Activated B cell treated with CpG ODN at 0.5 μM for 24 hours (primary cell): ENCODE measurements at regions of chr13 and their contacts with region 1.

Region 1: DNA sequence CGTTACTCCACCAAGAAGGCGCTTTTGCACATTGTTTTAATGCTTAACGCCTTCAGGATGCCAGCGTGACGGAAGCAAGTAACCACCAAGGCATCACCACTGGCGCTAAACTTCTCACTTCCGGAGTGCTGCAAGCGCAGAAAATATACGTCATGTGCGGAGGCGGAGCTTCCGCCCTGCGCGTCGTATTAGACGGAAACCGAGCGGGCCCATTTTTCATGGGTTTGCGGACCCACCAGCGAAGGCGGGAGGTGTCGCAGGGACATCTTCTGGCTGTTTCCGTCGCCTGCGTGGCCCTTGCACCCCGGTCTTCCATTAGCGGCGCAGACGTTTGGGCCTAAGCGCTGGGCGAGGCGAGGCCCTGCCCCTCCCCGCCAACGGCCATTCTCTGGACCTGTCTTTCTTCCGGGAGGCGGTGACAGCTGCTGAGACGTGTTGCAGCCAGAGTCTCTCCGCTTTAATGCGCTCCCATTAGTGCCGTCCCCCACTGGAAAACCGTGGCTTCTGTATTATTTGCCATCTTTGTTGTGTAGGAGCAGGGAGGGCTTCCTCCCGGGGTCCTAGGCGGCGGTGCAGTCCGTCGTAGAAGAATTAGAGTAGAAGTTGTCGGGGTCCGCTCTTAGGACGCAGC is at the start of gene ERCC5:
- DNase-seq: peak; percentile 96
- ATAC-seq: peak; percentile 72
- H3K4me3 Mint-ChIP-seq: peak within 1 kb of the TSS; percentile 97
- H3K27ac Mint-ChIP-seq: peak within 1 kb of the TSS; percentile 99
- H3K4me1 Mint-ChIP-seq: peaks cover 31% of the 10 kb centered on the region
- H3K27me3 Mint-ChIP-seq: peaks cover 2% of the 10 kb centered on the region
- CTCF ChIP-seq: no peak
- total RNA-seq, gene ERCC5: 62.8 and 74.3 TPM in 2 replicates

Region 2: GRCh38 chr13:102394158-102395053 is 451.3 kb before region 1 on chr13:
- CTCF ChIA-PET with region 1: no interaction called
- POLR2A ChIA-PET with region 1: interaction called, 9 read pairs
- intact Hi-C with region 1: loop called (anchors 1 kb)
- DNase-seq: peak; percentile 88
- ATAC-seq: peak; percentile 94
- H3K4me3 Mint-ChIP-seq: peak overlapping the region; percentile 87
- H3K27ac Mint-ChIP-seq: peak overlapping the region; percentile 56
- H3K4me1 Mint-ChIP-seq: peaks cover 8% of the 10 kb centered on the region
- H3K27me3 Mint-ChIP-seq: peaks cover 16% of the 10 kb centered on the region
- CTCF ChIP-seq: no peak

Region 3: DNA sequence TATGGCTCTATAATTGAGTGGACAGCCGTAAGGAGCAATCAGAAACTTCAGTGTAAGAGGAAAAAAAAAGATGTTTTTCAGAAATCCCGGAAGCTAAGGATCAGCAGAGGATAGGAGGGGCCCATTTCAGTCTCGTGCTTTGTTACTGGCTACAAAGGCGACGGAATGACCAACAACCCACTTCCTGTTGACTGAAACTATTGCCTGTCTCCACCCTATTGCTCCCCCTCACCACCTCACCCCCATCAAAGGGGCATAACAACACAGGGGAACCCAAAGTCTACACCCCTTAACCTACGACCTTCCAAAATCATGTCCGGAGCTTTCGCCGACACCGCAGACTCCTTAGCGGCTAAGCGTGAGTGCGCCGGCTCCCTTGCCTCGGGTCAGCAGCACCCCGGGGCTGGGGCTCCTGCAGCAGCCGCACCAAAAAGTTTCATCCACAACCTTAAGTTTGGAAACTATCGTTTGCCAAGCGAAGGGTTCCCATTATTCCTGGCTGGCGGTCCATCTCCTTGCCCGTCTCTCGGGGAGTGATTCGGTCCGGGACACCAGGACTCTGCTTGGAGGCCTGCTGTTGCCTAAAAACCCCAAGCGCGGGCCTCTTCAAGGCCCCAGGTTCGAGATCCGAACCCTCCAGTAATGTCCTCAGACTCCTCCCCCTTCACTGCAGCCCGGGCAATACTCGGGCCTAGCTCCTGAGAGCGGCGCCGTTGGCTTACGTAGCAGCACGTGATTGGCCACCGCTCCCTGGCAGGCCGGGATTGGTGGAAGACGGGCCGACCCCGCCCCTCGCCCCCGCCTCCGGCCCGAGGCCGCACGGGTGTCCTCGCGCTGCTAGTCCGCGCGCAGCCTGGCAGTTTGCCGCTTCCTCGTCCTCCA is 249.4 kb before region 1 on chr13 and contains the start of gene TPP2:
- CTCF ChIA-PET with region 1: interaction called, 48 read pairs
- POLR2A ChIA-PET with region 1: interaction called, 235 read pairs
- intact Hi-C with region 1: loop called (anchors 1 kb)
- DNase-seq: peak; percentile 97
- ATAC-seq: peak; percentile 92
- H3K4me3 Mint-ChIP-seq: peak within 1 kb of the TSS; percentile 96
- H3K27ac Mint-ChIP-seq: peak within 1 kb of the TSS; percentile 98
- H3K4me1 Mint-ChIP-seq: peaks cover 60% of the 10 kb centered on the region
- H3K27me3 Mint-ChIP-seq: no peaks in the 10 kb centered on the region
- CTCF ChIP-seq: no peak
- total RNA-seq, gene TPP2: 43.7 and 53.1 TPM in 2 replicates

Region 4: DNA sequence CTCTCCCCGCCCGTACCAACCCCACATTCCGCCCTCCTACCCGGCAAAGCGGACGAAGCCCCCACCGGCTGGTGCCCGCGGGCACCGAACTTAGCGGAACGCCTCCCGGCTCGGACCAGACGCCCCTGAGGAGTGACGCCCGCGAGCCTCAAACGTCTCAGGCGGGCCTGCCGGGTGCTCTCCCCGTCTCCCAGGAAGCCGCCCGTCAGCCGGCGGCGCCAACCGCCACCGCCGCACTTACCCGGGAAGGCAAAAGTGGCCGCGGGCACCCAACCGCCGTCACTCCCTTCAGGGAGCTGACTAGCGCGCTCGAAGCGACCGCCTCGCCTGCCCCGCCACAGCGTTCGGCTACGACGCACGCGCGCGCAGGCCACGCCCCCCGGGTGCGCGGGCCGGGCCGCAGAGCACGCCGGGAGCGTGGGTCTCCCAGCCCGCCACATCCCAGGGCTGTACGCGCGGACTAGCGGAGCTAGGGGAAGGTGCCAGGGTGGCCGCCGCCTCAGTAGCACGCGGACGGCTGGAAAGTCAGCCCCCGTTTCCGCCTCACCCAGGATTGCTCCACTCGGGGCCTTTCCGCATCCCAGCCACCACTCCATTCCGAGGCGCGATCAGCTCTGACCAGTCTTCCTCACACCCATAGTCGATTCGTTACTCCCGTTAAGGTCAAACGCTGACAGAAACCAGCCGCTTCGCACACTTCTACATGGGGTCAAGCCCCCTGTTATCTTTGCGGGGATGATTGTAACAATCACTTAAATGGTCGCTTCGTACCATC is 72.1 kb before region 1 on chr13 and contains the start of gene TEX30:
- CTCF ChIA-PET with region 1: interaction called, 4 read pairs
- POLR2A ChIA-PET with region 1: interaction called, 49 read pairs
- intact Hi-C with region 1: loop called (anchors 1 kb)
- DNase-seq: peak; percentile 94
- ATAC-seq: peak; percentile 95
- H3K4me3 Mint-ChIP-seq: peak within 1 kb of the TSS; percentile 95
- H3K27ac Mint-ChIP-seq: peak within 1 kb of the TSS; percentile 94
- H3K4me1 Mint-ChIP-seq: peaks cover 13% of the 10 kb centered on the region
- H3K27me3 Mint-ChIP-seq: no peaks in the 10 kb centered on the region
- CTCF ChIP-seq: no peak
- total RNA-seq, gene TEX30: 5.3 and 6.2 TPM in 2 replicates

Region 5: DNA sequence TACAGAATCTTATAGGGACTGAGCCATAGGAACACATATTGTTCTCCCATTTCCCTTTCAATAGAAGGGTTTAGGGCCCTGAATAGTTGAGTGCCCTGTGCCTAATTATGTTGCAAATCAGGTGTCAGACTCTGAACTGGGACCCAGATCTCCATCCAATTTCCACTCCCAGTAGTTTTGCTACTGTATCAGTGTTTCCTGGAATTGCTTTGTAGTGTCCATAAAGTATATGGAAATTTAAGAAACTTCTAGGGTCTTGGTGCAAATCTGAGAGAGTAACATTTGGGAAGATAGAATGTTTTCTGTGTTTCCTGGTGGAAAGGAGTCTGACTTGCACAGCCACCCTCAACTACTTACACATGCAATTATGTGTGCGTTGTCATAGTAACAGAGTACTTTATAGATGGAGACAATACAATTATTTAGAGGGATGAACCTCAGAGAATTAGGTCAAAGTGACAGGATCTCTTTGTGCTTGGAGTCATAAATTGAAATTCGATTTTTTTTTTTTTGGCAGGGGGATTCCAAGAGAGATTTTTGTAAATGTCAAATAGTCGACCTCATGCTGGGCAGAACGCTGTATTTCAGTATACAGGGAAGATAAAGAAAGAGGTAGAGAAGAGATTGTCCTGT is 221.2 kb after region 1 on chr13:
- CTCF ChIA-PET with region 1: no interaction called
- POLR2A ChIA-PET with region 1: no interaction called
- intact Hi-C with region 1: no loop called
- DNase-seq: no peak
- ATAC-seq: no peak
- H3K4me3 Mint-ChIP-seq: no peak overlapping the region
- H3K27ac Mint-ChIP-seq: no peak overlapping the region
- H3K4me1 Mint-ChIP-seq: peaks cover 12% of the 10 kb centered on the region
- H3K27me3 Mint-ChIP-seq: no peaks in the 10 kb centered on the region
- CTCF ChIP-seq: no peak

Region 6: DNA sequence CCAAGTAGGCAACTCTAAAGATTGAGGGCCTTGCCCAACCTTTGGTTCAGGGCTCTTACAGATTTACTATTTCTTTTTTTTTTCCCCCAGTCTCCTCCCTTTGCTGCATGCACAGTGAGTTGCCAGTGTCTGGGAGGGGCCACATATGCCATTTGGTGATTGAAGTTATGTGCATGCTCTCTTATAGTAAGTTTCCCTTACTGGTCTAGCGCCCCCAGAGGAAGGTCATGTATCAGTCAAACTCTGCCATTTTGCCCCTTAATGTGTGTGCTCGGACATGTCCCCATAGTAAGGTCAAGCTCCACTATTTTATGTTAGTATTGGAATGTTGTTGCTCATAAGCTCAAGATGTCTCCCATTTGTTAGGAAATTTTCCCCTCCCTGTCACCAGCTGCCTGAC is 1358.4 kb after region 1 on chr13:
- CTCF ChIA-PET with region 1: no interaction called
- POLR2A ChIA-PET with region 1: no interaction called
- intact Hi-C with region 1: no loop called
- DNase-seq: no peak
- ATAC-seq: no peak
- H3K4me3 Mint-ChIP-seq: no peak overlapping the region
- H3K27ac Mint-ChIP-seq: no peak overlapping the region
- H3K4me1 Mint-ChIP-seq: no peaks in the 10 kb centered on the region
- H3K27me3 Mint-ChIP-seq: no peaks in the 10 kb centered on the region
- CTCF ChIP-seq: no peak